ENCODE measurements at regions of chr4 and their contacts with region 1.

Region 1: DNA sequence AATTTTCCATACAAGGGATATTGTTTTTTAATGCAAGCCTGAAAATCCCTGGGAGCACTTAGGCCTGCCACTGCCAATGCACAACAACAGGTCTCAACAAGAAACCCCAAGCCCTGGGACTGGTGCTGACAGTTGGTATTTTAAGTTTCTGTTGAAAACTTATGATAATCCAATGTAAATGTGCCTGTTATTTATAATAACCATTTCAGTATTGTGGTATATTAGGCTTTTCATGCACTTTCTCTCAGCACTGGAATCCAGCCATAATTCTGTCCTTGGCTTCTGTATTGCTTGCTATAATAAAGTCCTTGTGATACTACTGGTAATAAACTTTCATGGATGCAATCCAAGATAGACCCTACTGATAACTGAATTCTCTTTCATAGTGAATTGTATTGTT is 218.9 kb downstream of the PCDH7 start:
- DNase-seq: no peak
- H3K4me3 ChIP-seq: no peak overlapping the region
- CTCF ChIP-seq: no peak

Region 2: DNA sequence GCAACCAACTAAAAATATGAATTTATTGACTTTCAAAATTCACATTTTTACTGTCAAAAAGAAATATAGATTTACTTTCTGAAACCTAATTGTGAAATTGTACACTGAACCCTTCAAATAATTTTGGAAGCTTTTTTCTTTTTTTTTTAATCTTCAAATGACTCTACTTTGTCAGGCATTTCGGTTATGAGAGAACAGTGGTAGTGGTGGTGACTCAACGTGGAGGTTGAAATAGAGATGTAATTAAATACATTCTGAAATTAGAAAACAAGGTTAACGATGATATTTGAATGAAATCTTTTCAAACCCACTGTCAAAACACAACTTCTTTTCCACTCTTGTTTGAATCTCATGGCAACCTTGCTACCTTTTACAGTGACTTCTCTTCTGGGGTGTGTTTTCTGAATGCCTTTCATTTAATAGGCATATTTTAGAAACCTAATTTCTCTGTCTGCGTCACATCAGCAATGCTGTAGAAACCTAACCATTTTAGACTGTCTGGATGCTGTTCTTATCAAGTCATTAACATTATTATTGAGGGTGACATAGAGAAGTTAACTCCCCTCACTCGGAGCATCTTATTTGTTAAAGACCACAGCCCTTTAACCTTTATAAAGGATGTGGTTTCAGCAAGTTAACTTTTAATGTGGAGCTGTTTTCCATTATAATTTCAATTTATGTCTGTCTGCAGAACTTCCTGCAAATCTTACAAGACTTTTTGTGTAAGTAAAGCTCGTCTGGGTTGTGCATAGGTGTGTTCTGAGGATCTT is 82.1 kb before region 1 on chr4:
- in situ Hi-C with region 1: loop called (anchors 5 kb)
- DNase-seq: no peak
- H3K4me3 ChIP-seq: no peak overlapping the region
- CTCF ChIP-seq: no peak

Region 3: GRCh38 chr4:31005037-31005436 is 66.0 kb after region 1 on chr4:
- in situ Hi-C with region 1: no loop called
- DNase-seq: no peak
- H3K4me3 ChIP-seq: no peak overlapping the region
- CTCF ChIP-seq: no peak